Dendritic cell treated with granulocyte-macrophage colony-stimulating factor and Interleukin-4, amounts not matched to agents 40 ng/mL and 50 ng/mL, for 4 days (primary cell): ENCODE measurements at regions of chr17 and their contacts with region 1.

Region 1: DNA sequence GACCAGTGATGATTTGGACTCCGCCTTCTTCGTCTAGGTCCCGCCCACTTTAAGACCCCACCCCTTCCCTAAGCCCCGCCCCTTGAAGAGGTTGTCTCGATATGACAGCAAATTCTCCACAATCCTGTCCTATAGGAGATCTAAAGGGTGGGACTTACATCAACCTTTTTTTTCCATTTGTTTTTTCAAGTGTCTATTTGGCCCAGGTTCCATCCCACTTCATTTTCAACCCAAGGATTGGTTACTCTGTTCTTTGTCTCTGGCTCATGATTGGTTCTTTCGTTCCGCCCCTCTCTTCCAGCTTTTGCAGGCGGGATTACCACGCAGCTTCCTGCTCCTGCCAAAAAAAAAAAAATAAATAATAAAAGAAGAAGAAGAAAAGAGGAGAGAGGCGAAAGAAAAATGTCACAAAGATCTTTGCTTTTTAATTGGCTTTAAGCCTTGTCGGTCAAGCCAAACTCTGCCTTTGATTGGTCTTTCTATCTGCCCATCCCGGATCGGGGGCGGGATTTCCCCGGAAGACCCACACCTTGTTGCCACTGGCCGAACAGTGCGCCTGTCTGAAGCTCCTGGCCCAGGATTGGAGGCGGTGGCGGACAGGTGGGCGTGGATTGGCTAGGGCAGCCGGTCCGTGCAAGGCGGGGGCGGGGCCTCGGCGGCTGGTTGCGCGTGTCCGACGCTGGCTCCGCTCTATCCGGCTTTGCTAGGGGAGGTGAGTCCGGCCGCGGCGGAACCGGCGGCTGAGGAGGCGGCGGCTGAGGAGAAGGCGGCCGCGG is 1.2 kb upstream of the NLK start:
- H3K4me3 Mint-ChIP-seq: peak overlapping the region; percentile 94
- H3K27ac Mint-ChIP-seq: peak overlapping the region; percentile 92
- H3K4me1 Mint-ChIP-seq: peaks cover 57% of the 10 kb centered on the region
- H3K27me3 Mint-ChIP-seq: peaks cover 12% of the 10 kb centered on the region

Region 2: GRCh38 chr17:27892866-27893769 is 148.1 kb before region 1 on chr17 and contains the start of gene LYRM9:
- intact Hi-C with region 1: loop called (anchors 5 kb)
- H3K4me3 Mint-ChIP-seq: peak within 1 kb of the TSS; percentile 74
- H3K27ac Mint-ChIP-seq: peak within 1 kb of the TSS; percentile 79
- H3K4me1 Mint-ChIP-seq: peaks cover 26% of the 10 kb centered on the region
- H3K27me3 Mint-ChIP-seq: no peaks in the 10 kb centered on the region

Region 3: DNA sequence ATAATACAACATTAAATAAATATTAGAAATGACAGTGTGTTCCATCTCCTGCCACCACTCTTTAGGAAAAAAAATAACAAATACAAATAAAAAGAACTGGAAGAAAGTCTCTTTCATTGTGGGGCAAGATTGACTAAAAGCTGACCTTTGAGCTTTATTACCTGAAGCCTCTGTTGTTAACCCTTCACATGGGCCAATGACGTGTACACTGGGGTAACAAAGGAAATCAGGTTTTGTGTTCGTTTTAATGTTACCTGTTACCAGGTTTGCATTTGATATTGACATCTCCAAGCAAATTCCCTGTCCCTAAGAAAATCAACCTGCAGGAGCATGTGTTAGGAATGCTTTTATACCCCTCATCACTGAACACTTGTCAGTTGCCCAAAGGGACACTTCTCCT is 40.2 kb after region 1 on chr17:
- intact Hi-C with region 1: loop called (anchors 5 kb)
- H3K4me3 Mint-ChIP-seq: no peak overlapping the region
- H3K27ac Mint-ChIP-seq: no peak overlapping the region
- H3K4me1 Mint-ChIP-seq: peaks cover 41% of the 10 kb centered on the region
- H3K27me3 Mint-ChIP-seq: no peaks in the 10 kb centered on the region

Region 4: DNA sequence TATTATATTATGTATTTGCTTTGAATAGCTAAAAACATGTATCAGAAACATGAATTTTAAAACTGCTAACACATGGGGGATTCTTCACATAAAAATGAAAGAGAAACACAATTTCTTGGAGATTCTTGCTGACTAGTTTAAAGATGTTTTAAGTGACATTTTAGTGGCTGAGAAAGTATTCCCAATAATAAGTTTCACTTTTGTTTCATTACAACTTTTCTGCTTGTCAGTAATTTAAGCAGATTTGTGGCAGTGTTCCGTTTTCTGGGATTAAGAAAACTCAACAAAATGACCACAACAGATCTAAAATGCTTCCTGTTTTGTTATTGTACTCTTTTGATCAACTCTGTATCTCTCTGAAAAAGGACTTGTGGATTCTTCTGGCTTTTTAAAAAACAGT is 77.1 kb after region 1 on chr17:
- intact Hi-C with region 1: loop called (anchors 1 kb)
- H3K4me3 Mint-ChIP-seq: peak overlapping the region; percentile 51
- H3K27ac Mint-ChIP-seq: peak overlapping the region; percentile 73
- H3K4me1 Mint-ChIP-seq: peaks cover 21% of the 10 kb centered on the region
- H3K27me3 Mint-ChIP-seq: no peaks in the 10 kb centered on the region